ENCODE measurements at regions of chr12 and their contacts with region 1.

Region 1: GRCh38 chr12:6540181-6540877 is 6.0 kb downstream of the GAPDH start:
- DNase-seq: peak; percentile 67
- ATAC-seq: peak; percentile 61
- H3K4me3 ChIP-seq: peak overlapping the region; percentile 31 to 58
- H3K27ac ChIP-seq: peak overlapping the region; percentile 84
- H3K4me1 ChIP-seq: peaks cover 20 to 64% of the 10 kb centered on the region in 2 experiments
- H3K27me3 ChIP-seq: no peaks in the 10 kb centered on the region
- CTCF ChIP-seq: no peak
- POLR2A ChIP-seq: no peak
- RAD21 ChIP-seq: no peak

Region 2: GRCh38 chr12:6423267-6424007 is 116.9 kb before region 1 on chr12:
- CTCF ChIA-PET with region 1: interaction called, 13 read pairs
- POLR2A ChIA-PET with region 1: interaction called, 6 read pairs
- RAD21 ChIA-PET with region 1: no interaction called
- intact Hi-C with region 1: loop called (anchors 1 kb)
- DNase-seq: peak; percentile 84
- ATAC-seq: peak; percentile 97
- H3K4me3 ChIP-seq: no peak overlapping the region
- H3K27ac ChIP-seq: no peak overlapping the region
- H3K4me1 ChIP-seq: peaks cover 4 to 20% of the 10 kb centered on the region in 2 experiments; a peak in 3 of 4 replicates
- H3K27me3 ChIP-seq: no peaks in the 10 kb centered on the region
- CTCF ChIP-seq: peak; percentile 78 to 90 (median 90)
- POLR2A ChIP-seq: peak; percentile 31
- RAD21 ChIP-seq: peak; percentile 97

Region 3: GRCh38 chr12:6554168-6555017 is 14.1 kb after region 1 on chr12:
- CTCF ChIA-PET with region 1: interaction called, 19 read pairs
- POLR2A ChIA-PET with region 1: interaction called, 84 read pairs
- RAD21 ChIA-PET with region 1: no interaction called
- intact Hi-C with region 1: no loop called
- DNase-seq: peak; percentile 62
- ATAC-seq: peak; percentile 90
- H3K4me3 ChIP-seq: no peak overlapping the region
- H3K27ac ChIP-seq: no peak overlapping the region
- H3K4me1 ChIP-seq: peaks cover 3 to 16% of the 10 kb centered on the region in 2 experiments; a peak in 3 of 4 replicates
- H3K27me3 ChIP-seq: no peaks in the 10 kb centered on the region
- CTCF ChIP-seq: peak; percentile 40 to 61 (median 60); a peak in 5 of 6 replicates
- POLR2A ChIP-seq: no peak
- RAD21 ChIP-seq: peak; percentile 61

Measured in HCT116 (cell line).